AG04450 (cell line): ENCODE measurements at regions of chr6 and their contacts with region 1.

Region 1: GRCh38 chr6:127516666-127517273 is 2.4 kb downstream of the MTCL3 start:
- DNase-seq: no peak
- H3K4me3 ChIP-seq: peak overlapping the region; percentile 71
- H3K27ac ChIP-seq: peak overlapping the region; percentile 13
- H3K27me3 ChIP-seq: no peaks in the 10 kb centered on the region
- CTCF ChIP-seq: peak; percentile 74

Region 2: GRCh38 chr6:127291495-127291894 is 225.3 kb before region 1 on chr6:
- CTCF ChIA-PET with region 1: interaction called, 15 read pairs
- POLR2A ChIA-PET with region 1: no interaction called
- DNase-seq: no peak
- H3K4me3 ChIP-seq: no peak overlapping the region
- H3K27ac ChIP-seq: no peak overlapping the region
- H3K27me3 ChIP-seq: no peaks in the 10 kb centered on the region
- CTCF ChIP-seq: no peak

Region 3: GRCh38 chr6:127342946-127343808 is 173.6 kb before region 1 on chr6 and contains the start of gene ECHDC1:
- CTCF ChIA-PET with region 1: interaction called, 31 read pairs
- POLR2A ChIA-PET with region 1: no interaction called
- DNase-seq: peak; percentile 20
- H3K4me3 ChIP-seq: peak within 1 kb of the TSS; percentile 92
- H3K27ac ChIP-seq: peak within 1 kb of the TSS; percentile 93
- H3K27me3 ChIP-seq: no peaks in the 10 kb centered on the region
- CTCF ChIP-seq: 0 out of 2 replicates have a peak, but pooled peaks have one; percentile 4
- polyA plus RNA-seq, gene ECHDC1: 42.9 and 60.7 TPM in 2 replicates

Region 4: DNA sequence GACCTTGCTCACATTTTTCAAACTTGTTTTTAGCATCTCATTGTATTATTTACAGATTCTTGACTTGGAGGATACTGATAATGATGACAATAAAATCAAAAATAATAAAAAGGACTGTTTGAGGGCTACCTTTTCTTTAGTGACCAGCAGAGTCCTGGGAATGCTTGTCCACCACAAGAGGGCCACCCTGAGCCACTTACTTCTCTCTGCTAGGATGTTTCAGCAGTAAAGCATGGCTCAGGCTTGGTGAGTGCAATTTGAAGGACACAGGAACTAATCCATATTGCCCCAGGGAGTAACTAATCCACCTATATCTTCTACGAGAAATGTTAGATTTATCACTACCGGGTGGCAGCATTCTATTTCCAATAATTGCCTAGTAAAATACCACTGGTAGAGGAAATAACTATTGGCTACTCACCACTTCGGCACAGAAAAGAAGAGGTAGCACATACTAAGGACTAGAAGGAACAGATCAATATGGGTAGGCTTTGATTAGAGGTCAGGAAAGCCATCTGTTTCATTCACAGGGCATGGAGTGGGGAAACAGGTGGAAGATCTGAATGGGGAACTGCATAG is 51.8 kb before region 1 on chr6:
- CTCF ChIA-PET with region 1: interaction called, 30 read pairs
- POLR2A ChIA-PET with region 1: interaction called, 7 read pairs
- DNase-seq: no peak
- H3K4me3 ChIP-seq: no peak overlapping the region
- H3K27ac ChIP-seq: no peak overlapping the region
- H3K27me3 ChIP-seq: no peaks in the 10 kb centered on the region
- CTCF ChIP-seq: peak; percentile 98

Region 5: DNA sequence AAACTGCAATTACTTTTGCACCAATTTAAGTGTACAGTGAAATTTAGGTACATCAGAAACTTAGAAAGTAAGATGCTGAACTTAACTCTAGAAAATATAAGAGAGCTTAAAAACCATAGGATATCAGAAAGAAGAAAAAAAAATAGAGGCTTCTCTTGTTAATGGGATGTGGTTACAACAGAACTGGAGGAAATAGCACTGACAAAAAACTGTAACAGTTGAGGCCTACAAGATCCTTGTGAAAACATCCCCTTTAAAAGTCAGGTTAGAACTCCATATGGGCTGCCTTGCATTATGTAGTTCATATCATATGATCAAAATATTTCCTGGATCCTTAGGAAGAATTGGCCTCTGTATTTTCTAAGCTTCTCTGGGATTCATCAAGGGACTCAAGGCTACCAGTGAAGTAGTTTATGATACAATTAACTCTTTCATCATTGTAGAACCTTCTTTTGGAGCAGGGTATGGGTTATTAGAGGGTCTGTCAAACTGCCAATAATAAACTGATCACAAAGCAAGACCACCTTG is 22.5 kb before region 1 on chr6:
- CTCF ChIA-PET with region 1: interaction called, 26 read pairs
- POLR2A ChIA-PET with region 1: no interaction called
- DNase-seq: no peak
- H3K4me3 ChIP-seq: no peak overlapping the region
- H3K27ac ChIP-seq: no peak overlapping the region
- H3K27me3 ChIP-seq: no peaks in the 10 kb centered on the region
- CTCF ChIP-seq: no peak

Region 6: GRCh38 chr6:127547215-127547614 is 30.4 kb after region 1 on chr6:
- CTCF ChIA-PET with region 1: interaction called, 42 read pairs
- POLR2A ChIA-PET with region 1: no interaction called
- DNase-seq: no peak
- H3K4me3 ChIP-seq: no peak overlapping the region
- H3K27ac ChIP-seq: no peak overlapping the region
- H3K27me3 ChIP-seq: no peaks in the 10 kb centered on the region
- CTCF ChIP-seq: peak; percentile 30; the same call in 1 of the 2 replicates

Region 7: DNA sequence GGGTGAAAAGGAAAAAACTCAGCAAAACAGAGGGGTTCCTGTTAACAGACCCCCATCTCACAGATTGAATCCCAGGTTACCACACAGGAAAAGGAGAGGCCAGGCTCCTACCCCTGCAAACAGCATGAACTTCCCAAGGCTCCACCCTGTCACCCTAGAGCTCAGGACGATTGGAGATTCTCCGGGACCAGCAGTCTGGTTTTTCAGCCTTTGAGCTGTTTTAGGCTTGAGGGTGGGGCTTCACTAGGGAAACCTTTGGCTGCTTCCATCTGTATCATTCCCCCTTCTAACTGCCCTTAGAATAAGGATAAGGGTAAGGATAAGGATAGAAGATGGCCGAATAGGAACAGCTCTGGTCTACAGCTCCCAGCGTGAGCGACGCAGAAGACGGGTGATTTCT is 76.2 kb after region 1 on chr6:
- CTCF ChIA-PET with region 1: no interaction called
- POLR2A ChIA-PET with region 1: no interaction called
- DNase-seq: no peak
- H3K4me3 ChIP-seq: no peak overlapping the region
- H3K27ac ChIP-seq: no peak overlapping the region
- H3K27me3 ChIP-seq: no peaks in the 10 kb centered on the region
- CTCF ChIP-seq: no peak

Region 8: GRCh38 chr6:127775371-127775770 is 258.6 kb after region 1 on chr6:
- CTCF ChIA-PET with region 1: no interaction called
- POLR2A ChIA-PET with region 1: no interaction called
- DNase-seq: no peak
- H3K4me3 ChIP-seq: no peak overlapping the region
- H3K27ac ChIP-seq: no peak overlapping the region
- H3K27me3 ChIP-seq: no peaks in the 10 kb centered on the region
- CTCF ChIP-seq: no peak